Sciatic nerve (tissue), 2 donors: ENCODE measurements at regions of chr1 and their contacts with region 1.

Region 1: DNA sequence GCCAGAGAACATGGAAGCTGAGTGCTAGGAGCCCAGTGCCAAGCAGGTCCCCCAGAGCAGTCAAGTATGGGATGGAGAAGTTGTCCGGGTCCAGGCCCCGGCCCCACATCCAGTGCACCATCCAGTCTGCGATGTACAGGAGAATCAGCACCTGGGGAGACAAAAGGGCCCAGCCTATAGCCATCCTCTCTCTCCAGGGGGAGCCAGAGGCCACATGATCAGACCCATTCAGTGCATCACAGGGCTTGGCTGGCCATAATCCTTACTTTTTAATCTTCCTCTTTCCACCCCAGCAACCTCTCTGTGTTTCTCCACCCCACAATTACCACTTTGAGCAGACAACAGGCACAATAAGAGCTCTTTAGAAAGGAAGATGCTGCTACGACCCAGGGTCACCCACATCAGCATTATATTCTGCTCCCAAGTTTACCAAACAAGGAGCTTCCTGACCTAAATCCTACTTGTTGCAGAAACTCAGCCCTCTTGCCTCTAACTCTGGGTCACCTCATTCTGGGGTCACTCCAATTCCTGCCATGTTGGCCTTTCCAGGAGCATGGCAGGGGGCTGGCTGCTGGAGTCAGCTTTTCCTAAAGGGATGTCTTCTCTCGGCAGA is 16.4 kb upstream of the RAB29 start:
- DNase-seq: peak; percentile 82
- ATAC-seq: peak; percentile 92

Region 2: DNA sequence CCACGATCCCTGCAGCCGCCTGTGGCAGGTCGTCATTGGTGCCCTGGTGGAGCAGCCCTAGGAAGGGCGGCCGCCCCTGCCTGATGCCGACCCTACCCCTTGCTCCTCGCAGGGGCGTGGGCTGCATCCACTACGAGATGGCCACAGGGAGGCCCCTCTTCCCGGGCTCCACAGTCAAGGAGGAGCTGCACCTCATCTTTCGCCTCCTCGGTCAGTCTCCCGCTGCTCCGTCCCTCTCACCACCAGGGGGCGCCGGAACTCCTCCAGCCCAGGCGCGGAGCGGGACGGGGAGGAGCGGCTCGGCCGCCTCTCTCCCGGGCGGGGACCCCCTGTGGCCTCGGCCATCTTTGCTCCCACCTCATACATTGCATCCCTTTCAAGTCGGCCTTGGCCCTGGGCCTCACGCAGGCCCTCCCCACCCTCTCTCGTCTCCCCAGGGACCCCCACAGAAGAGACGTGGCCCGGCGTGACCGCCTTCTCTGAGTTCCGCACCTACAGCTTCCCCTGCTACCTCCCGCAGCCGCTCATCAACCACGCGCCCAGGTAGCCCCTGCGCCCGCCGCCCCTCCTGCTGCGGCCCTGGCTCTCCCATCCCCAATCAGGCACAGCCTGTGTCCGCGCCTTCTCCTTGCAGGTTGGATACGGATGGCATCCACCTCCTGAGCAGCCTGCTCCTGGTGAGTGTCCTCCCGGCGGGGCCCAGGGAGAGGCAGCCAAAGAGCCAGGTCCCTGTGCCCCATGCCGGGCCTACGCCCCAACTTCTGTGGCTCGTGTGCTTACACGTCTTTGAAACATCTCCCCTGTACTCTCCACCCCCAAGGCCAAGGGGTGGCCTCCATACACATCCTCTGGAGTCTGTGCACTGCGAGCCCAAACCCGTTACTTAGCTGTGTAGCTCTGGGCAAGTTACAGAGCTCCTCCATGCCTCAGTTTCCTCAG is 262.5 kb before region 1 on chr1:
- intact Hi-C with region 1: no loop called
- DNase-seq: peak; percentile 92
- ATAC-seq: peak; percentile 92

Region 3: GRCh38 chr1:205748403-205749233 is 43.1 kb before region 1 on chr1:
- intact Hi-C with region 1: no loop called
- DNase-seq: no peak
- ATAC-seq: peak; percentile 54

Region 4: GRCh38 chr1:205766038-205766437 is 25.6 kb before region 1 on chr1:
- intact Hi-C with region 1: no loop called
- DNase-seq: no peak
- ATAC-seq: no peak

Region 5: DNA sequence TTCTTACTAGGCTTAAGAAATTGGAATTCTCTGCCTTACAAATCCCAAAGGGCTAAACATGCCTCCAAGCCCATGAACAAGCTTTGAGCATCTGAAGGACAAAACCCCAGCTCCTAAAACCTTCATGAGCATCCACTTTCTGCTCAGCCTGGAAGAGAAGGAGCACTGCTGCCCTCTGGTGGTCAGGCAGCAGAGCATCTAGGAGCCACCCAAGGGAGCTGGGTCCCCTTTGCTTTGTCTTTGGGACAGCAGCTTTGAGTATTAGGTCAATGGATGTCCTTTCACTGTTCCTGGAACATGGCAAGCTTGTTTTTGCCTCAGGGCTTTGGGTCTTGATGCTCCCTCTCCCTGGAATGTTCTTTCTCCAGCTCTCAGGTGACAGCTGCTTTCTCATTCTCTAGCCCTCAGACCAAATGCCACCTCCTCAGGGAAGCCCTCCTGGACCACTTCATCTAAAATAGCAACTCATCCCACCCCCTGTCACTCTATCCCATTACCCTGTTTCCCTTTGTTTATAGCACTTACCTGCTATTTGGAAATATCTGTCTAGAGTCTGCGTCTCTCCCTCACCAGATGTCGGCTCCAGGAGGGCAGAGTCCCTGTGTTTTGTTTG is 185.8 kb after region 1 on chr1:
- intact Hi-C with region 1: loop called (anchors 5 kb)
- DNase-seq: peak; percentile 88
- ATAC-seq: peak; percentile 79

Region 6: GRCh38 chr1:206106328-206107167 is 314.9 kb after region 1 on chr1:
- intact Hi-C with region 1: loop called (anchors 10 kb)
- DNase-seq: peak; percentile 90
- ATAC-seq: peak; percentile 91